ENCODE measurements at regions of chr20 and their contacts with region 1.

Region 1: DNA sequence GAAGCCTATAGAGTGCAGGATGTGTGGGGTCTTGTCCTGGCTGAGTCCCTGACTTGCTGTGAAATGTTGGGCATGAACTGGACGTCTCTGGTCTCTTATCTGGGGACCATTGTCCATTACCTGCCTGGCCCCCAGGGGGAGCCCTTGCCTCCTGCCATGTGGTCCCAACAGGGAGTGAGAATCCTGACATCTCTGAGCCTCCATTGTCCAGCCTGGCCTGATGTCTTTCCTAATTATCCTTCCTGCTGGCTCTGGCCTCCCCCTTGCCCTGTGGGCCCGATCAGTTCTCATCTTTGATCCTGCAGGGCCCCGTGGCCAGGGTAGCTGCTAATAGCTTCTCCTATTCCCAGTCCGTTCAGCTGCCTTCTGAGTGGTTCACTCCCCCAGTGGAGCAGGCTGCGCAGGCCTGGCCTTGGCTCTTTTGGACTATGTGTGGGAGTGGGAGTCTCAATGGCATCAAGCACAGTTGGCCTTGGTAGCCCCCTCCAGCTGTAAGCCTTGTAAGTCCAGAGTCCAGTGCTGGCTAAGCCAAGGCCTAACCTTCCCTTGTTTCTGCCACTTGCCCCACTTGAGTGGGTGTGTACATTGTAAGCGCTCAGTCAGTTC is 77.9 kb upstream of the RALY start:
- DNase-seq: peak in 8 of 9 donors; percentile 11 to 62 (median 30)
- ATAC-seq: peak; percentile 76
- H3K4me3 ChIP-seq: no peak overlapping the region
- H3K4me3 Mint-ChIP-seq: no peak overlapping the region
- H3K27ac ChIP-seq: no peak overlapping the region
- H3K27ac Mint-ChIP-seq: peak overlapping the region in 1 of 9 donors; percentile 25
- H3K4me1 ChIP-seq: peaks cover 0 to 4% of the 10 kb centered on the region in 2 donors
- H3K4me1 Mint-ChIP-seq: peaks cover 5 to 20% (median 15%) of the 10 kb centered on the region in 7 donors
- H3K27me3 ChIP-seq: no peaks in the 10 kb centered on the region
- H3K27me3 Mint-ChIP-seq: peaks cover 0 to 31% (median 0%) of the 10 kb centered on the region in 5 donors

Region 2: GRCh38 chr20:33277471-33278441 is 638.1 kb before region 1 on chr20:
- CTCF ChIA-PET with region 1: no interaction called
- POLR2A ChIA-PET with region 1: no interaction called
- intact Hi-C with region 1: no loop called
- DNase-seq: no peak
- ATAC-seq: no peak
- H3K4me3 ChIP-seq: no peak overlapping the region
- H3K4me3 Mint-ChIP-seq: no peak overlapping the region
- H3K27ac ChIP-seq: no peak overlapping the region
- H3K27ac Mint-ChIP-seq: no peak overlapping the region
- H3K4me1 ChIP-seq: no peaks in the 10 kb centered on the region
- H3K4me1 Mint-ChIP-seq: no peaks in the 10 kb centered on the region
- H3K27me3 ChIP-seq: no peaks in the 10 kb centered on the region
- H3K27me3 Mint-ChIP-seq: peaks cover 0 to 17% (median 0%) of the 10 kb centered on the region in 5 donors

Region 3: GRCh38 chr20:33791959-33792597 is 123.8 kb before region 1 on chr20:
- CTCF ChIA-PET with region 1: interaction called, 9 read pairs
- POLR2A ChIA-PET with region 1: no interaction called
- intact Hi-C with region 1: loop called (anchors 1 to 2 kb)
- DNase-seq: peak in 8 of 9 donors; percentile 23 to 67 (median 41)
- ATAC-seq: peak; percentile 74
- H3K4me3 ChIP-seq: no peak overlapping the region
- H3K4me3 Mint-ChIP-seq: no peak overlapping the region
- H3K27ac ChIP-seq: no peak overlapping the region
- H3K27ac Mint-ChIP-seq: no peak overlapping the region
- H3K4me1 ChIP-seq: peaks cover 0 to 9% of the 10 kb centered on the region in 2 donors
- H3K4me1 Mint-ChIP-seq: peaks cover 0 to 18% (median 4%) of the 10 kb centered on the region in 7 donors
- H3K27me3 ChIP-seq: no peaks in the 10 kb centered on the region
- H3K27me3 Mint-ChIP-seq: no peaks in the 10 kb centered on the region

Region 4: DNA sequence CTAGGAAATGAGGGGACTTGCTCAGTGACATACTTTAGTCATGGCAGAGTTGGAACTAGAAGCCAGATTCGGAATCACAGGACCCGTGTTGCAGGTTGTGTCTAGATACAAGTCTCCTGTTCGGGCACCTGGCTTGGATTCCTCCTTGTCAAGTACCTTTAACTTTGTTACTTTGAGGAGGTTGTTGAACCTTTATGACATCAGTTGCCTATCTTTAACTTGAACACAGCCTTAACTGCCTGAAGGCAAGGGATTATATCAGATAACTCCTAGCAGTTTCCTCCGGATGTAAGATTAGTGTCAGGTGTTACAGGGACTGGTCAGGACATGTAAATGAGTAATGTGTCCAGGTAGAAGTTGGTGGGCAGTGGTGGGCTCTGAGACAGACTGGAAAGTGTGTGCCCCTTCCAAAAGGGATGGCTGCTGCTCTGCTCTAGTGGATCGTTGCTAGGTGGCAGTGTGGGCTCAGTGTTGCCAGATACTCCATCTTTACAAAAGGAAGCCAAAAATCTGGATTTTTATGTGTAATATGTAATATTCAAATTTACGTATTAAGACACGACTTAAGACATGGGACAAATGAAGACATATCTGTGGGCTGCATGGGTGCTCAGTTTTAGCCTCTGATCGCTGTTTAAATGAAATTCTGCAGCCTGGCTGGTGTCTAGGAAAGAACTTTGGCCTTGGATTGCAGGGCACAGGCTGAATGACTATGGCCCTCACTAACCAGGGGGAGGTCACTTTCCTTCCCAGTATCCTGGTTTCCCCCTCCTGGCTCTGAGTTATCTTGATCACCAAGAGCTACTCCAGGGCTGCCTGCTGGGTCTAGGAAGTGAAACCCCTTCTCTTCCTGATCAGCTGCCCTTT is 77.6 kb before region 1 on chr20:
- CTCF ChIA-PET with region 1: interaction called, 3 read pairs
- POLR2A ChIA-PET with region 1: no interaction called
- intact Hi-C with region 1: loop called in 1 of 2 experiments (anchors 1 kb)
- DNase-seq: no peak
- ATAC-seq: no peak
- H3K4me3 ChIP-seq: no peak overlapping the region
- H3K4me3 Mint-ChIP-seq: peak overlapping the region in 4 of 10 donors; percentile 16 to 34 (median 25)
- H3K27ac ChIP-seq: no peak overlapping the region
- H3K27ac Mint-ChIP-seq: peak overlapping the region in 6 of 9 donors; percentile 11 to 84 (median 48)
- H3K4me1 ChIP-seq: peaks cover 10 to 61% of the 10 kb centered on the region in 2 donors
- H3K4me1 Mint-ChIP-seq: peaks cover 66 to 96% (median 91%) of the 10 kb centered on the region in 7 donors
- H3K27me3 ChIP-seq: no peaks in the 10 kb centered on the region
- H3K27me3 Mint-ChIP-seq: no peaks in the 10 kb centered on the region

Region 5: DNA sequence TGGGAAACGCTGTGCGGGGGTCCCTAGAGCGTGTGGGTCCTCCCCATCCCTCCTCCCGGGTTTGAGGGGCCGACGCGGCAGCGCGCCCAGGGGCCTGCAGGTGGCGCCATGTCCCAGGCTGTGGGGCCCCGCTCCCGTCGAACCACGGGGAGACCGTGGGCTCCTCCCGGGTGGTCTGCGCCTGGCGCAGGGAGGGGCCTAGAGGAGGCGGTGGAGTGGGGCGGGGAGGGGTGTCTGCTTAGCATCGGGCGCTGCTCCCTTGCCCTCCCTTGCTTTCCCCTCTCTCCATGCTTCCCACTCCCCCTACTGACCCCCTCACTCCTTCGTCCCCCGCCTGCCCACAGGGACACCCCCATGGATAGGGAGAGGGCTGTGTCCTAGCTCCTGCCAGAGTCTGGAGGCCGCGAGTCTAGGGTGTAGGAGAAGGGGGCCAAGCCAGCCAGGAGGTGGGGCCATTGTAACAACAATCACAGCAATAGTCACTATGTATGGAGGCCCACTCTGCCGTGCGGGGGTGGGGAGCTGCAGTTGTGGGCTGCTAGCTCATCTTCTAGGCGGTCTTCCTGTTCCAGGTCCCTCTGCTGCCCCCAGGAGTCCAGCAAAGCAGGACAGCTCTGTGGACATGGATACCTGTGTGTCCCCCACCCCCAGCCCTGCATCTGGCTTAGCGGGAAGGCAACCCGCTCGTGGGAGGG is 53.0 kb before region 1 on chr20:
- CTCF ChIA-PET with region 1: interaction called, 5 read pairs
- POLR2A ChIA-PET with region 1: no interaction called
- intact Hi-C with region 1: loop called in 1 of 2 experiments (anchors 1 kb)
- DNase-seq: peak in 8 of 9 donors; percentile 23 to 58 (median 43)
- ATAC-seq: peak; percentile 64
- H3K4me3 ChIP-seq: no peak overlapping the region
- H3K4me3 Mint-ChIP-seq: no peak overlapping the region
- H3K27ac ChIP-seq: no peak overlapping the region
- H3K27ac Mint-ChIP-seq: no peak overlapping the region
- H3K4me1 ChIP-seq: peaks cover 18 to 26% of the 10 kb centered on the region in 2 donors
- H3K4me1 Mint-ChIP-seq: peaks cover 18 to 31% (median 27%) of the 10 kb centered on the region in 7 donors
- H3K27me3 ChIP-seq: no peaks in the 10 kb centered on the region
- H3K27me3 Mint-ChIP-seq: peaks cover 0 to 3% (median 0%) of the 10 kb centered on the region in 5 donors

Region 6: DNA sequence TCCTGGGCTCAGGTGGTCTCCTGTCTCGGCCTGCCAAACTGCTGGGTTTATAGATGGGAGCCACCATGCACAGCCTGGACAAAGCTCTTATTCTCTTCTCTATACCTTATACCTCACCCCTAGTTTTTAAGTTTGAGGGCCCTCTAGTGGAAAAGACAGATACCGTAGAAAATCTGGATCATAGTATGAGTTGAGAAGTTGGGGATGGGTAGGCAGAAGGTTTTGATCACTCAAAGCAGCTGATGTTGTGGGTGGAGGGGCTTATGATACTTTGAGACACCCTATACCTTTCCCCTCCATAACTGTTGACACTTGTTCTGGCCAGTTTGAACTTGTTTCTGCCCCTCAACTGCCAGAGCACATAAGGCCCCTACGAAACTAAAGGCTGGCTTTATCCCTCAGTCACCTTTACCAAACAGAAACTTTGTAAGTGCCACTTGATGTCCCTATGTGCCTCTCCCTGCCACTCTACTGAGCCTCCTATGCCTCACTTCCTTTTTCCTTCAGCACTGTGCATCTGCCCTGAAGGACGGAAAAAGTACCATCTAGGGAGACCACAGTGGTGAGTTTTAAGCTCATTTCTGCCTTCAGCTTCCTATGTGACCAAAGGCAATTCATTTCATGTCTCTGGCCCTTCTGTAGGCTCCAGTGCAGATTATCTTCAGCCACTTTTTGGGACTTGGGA is 106.5 kb after region 1 on chr20:
- CTCF ChIA-PET with region 1: interaction called, 3 read pairs
- POLR2A ChIA-PET with region 1: no interaction called
- intact Hi-C with region 1: loop called in 1 of 2 experiments (anchors 5 kb)
- DNase-seq: peak in 7 of 9 donors; percentile 2 to 32 (median 18)
- ATAC-seq: peak; percentile 69
- H3K4me3 ChIP-seq: no peak overlapping the region
- H3K4me3 Mint-ChIP-seq: peak overlapping the region in 4 of 10 donors; percentile 3 to 19 (median 12)
- H3K27ac ChIP-seq: no peak overlapping the region
- H3K27ac Mint-ChIP-seq: peak overlapping the region; percentile 21 to 76 (median 68)
- H3K4me1 ChIP-seq: peaks cover 29 to 50% of the 10 kb centered on the region in 2 donors
- H3K4me1 Mint-ChIP-seq: peaks cover 59 to 93% (median 88%) of the 10 kb centered on the region in 7 donors
- H3K27me3 ChIP-seq: no peaks in the 10 kb centered on the region
- H3K27me3 Mint-ChIP-seq: no peaks in the 10 kb centered on the region

Region 7: DNA sequence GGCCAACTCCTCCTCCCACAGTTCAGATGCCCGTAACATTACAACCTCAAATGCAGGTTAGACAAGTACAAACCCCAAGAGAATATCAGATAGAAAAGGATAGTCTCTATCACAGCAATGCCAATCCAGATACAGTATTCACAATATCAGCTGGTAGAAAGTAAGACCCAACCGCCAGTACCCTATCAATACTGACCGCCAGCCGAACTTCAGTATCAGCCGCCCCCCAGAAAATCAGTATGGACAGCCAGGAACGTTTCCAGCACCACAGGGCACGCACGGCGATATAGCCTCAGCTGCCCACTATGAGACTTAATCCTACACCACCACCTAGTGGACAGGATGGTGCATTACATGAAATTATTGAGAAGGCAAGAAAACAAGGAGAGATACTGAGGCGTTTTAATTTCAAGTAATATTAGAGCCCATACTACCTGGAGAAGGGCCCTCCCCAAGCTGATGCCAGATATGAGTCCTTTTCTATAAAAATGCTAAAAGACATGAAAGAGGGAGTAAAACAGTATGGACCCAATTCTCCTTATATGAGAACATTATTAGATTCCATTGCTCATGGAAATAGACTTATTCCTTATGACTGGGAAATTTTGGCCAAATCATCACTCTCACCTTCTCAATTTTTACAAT is 213.8 kb after region 1 on chr20:
- CTCF ChIA-PET with region 1: interaction called, 21 read pairs
- POLR2A ChIA-PET with region 1: no interaction called
- intact Hi-C with region 1: loop called (anchors 1 kb)
- DNase-seq: peak; percentile 36 to 79 (median 67)
- ATAC-seq: peak; percentile 99
- H3K4me3 ChIP-seq: no peak overlapping the region
- H3K4me3 Mint-ChIP-seq: peak overlapping the region in 8 of 10 donors; percentile 18 to 73 (median 46)
- H3K27ac ChIP-seq: no peak overlapping the region
- H3K27ac Mint-ChIP-seq: no peak overlapping the region
- H3K4me1 ChIP-seq: no peaks in the 10 kb centered on the region
- H3K4me1 Mint-ChIP-seq: peaks cover 0 to 8% (median 4%) of the 10 kb centered on the region in 7 donors
- H3K27me3 ChIP-seq: no peaks in the 10 kb centered on the region
- H3K27me3 Mint-ChIP-seq: peaks cover 0 to 23% (median 7%) of the 10 kb centered on the region in 5 donors

Measured in naive thymus-derived CD4-positive, alpha-beta T cell (primary cell).